ENCODE measurements at regions of chr19 and their contacts with region 1.

Region 1: GRCh38 chr19:4256563-4256962 is 9.7 kb downstream of the YJU2 start:
- DNase-seq: no peak
- H3K4me3 ChIP-seq: no peak overlapping the region
- H3K27ac ChIP-seq: no peak overlapping the region
- H3K4me1 ChIP-seq: no peaks in the 10 kb centered on the region
- H3K27me3 ChIP-seq: no peaks in the 10 kb centered on the region
- CTCF ChIP-seq: no peak
- POLR2A ChIP-seq: no peak

Region 2: GRCh38 chr19:4338441-4339001 is 82.0 kb after region 1 on chr19 and contains the start of gene STAP2:
- intact Hi-C with region 1: loop called (anchors 5 kb)
- DNase-seq: peak; percentile 77 to 79
- H3K4me3 ChIP-seq: peak within 1 kb of the TSS; percentile 48 to 77 (median 63)
- H3K27ac ChIP-seq: peak within 1 kb of the TSS; percentile 88 to 93
- H3K4me1 ChIP-seq: no peaks in the 10 kb centered on the region
- H3K27me3 ChIP-seq: no peaks in the 10 kb centered on the region
- CTCF ChIP-seq: no peak
- POLR2A ChIP-seq: no peak
- total RNA-seq, gene STAP2: 1.6 to 51.4 (median 25.9) TPM